ENCODE measurements at regions of chr22 and their contacts with region 1.

Region 1: DNA sequence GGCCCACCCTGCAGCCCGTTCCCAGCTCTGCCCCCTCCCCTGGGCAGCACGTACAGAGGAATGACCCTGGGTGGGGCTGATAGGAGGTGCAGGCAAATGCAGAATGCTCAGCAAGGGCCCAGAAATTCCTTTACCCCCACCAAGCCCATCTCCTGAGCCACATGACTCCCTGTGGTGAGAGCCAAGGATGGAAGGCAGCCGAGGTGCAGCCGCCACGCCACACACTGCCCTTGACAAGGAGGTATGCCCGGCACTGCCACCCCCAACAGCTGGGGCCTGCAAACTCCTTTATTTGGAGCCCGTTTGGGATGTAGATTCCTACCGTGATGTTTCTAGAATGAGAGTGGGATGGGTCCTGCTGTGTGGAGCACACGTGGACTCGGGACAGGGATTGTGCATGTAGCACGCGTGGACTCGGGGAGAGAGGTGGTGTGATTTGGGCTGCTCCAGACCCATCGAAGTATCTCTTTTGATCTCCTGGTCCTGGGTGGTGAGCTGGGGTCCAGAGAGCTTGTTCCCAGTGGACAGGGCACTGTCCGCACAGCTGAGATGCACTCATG is 12.9 kb downstream of the GTSE1 start:
- DNase-seq: no peak
- ATAC-seq: peak in 2 of 4 donors; percentile 29 to 31
- H3K4me3 ChIP-seq: no peak overlapping the region
- H3K27ac ChIP-seq: no peak overlapping the region
- H3K4me1 ChIP-seq: no peaks in the 10 kb centered on the region
- H3K27me3 ChIP-seq: no peaks in the 10 kb centered on the region
- CTCF ChIP-seq: no peak

Region 2: DNA sequence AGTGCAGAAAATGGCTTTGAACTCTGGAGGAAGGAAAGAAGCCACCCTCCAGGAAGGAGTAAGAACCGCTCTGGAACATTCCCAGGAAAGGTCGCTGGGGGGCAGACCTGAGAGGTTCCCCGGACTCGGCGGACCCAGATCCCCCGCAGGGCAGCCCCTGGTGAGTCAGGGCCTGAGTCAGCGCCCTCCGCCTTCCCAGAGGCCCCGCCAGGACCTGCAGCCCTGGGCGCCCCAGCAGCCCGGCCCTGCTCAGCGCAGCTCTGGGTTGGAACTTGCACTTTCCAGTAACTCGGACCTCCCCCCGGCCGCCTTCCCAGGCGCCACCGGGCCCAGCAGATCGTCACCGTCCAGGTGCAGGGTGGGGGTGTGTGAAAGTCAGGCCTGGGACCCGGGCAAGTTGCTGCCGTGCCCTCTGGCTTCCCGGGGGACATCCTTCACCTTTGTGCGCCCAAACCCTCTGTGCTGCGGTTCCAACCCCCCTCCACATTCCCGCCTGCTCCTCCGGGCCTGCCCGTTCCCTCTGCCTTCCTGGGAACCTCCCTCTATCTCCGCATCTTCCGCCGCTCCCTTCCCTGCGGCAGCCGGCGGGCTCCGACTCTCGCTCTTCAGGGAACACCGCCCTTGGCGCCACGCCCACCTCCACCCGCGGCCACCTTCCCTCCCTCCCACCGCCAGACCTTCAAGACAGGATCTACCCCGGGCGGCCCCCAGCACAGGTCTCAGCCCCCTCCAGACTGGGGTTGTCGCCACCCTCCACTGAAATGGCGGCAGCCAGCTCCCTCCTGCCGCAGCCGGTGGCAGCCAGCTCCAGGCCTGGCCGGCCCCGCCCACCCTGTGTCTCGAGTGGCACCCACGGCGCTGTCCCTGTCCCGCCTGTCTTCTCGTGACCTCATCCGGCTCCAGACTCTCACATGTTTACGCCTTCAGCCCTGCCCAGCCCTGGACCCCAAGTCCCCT is 295.9 kb before region 1 on chr22:
- intact Hi-C with region 1: loop called in 1 of 2 experiments (anchors 5 kb)
- DNase-seq: peak; percentile 96 to 98
- ATAC-seq: peak; percentile 95 to 97 (median 96)
- H3K4me3 ChIP-seq: peak overlapping the region; percentile 84
- H3K27ac ChIP-seq: peak overlapping the region; percentile 96
- H3K4me1 ChIP-seq: peaks cover 17% of the 10 kb centered on the region
- H3K27me3 ChIP-seq: no peaks in the 10 kb centered on the region
- CTCF ChIP-seq: peak; percentile 72

Measured in psoas muscle (tissue), 8 donors.